ENCODE measurements at regions of chr15 and their contacts with region 1.

Region 1: DNA sequence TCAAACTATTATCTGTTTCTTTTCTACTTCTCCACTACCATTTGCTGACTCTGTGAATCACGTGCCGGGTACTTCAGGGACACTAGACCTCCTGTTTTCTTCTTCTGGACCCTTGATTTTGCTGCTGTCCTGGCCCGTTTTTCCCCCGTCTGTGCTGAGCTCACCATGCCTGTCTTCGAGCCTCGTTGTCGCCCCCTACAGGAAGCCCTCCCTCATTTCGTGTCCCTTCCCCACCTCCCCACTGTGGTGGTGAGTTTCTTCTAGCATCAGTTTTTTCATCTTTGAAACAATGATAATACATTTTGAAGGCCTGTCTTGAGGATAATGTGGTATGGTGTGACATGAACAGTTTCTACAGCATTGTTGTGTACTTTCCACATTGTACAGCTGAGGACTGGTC is 12.8 kb downstream of the GABRG3 start:
- DNase-seq: peak; percentile 42 to 64 (median 52)
- ATAC-seq: peak; percentile 93
- H3K4me3 ChIP-seq: no peak overlapping the region
- H3K27ac ChIP-seq: no peak overlapping the region
- H3K4me1 ChIP-seq: no peaks in the 10 kb centered on the region
- H3K27me3 ChIP-seq: peaks cover 3 to 10% of the 10 kb centered on the region in 2 experiments; a peak in 3 of 5 replicates
- CTCF ChIP-seq: peak; percentile 49 to 80 (median 55)
- EP300 ChIP-seq: no peak
- POLR2A ChIP-seq: no peak
- RAD21 ChIP-seq: 0 out of 4 replicates have a peak, but pooled peaks of 1 of the 2 experiments have one; percentile 4

Region 2: GRCh38 chr15:26598704-26599103 is 385.1 kb before region 1 on chr15:
- CTCF ChIA-PET with region 1: no interaction called
- POLR2A ChIA-PET with region 1: no interaction called
- in situ Hi-C with region 1: no loop called
- intact Hi-C with region 1: no loop called
- DNase-seq: no peak
- ATAC-seq: no peak
- H3K4me3 ChIP-seq: no peak overlapping the region
- H3K27ac ChIP-seq: no peak overlapping the region
- H3K4me1 ChIP-seq: no peaks in the 10 kb centered on the region
- H3K27me3 ChIP-seq: no peaks in the 10 kb centered on the region
- CTCF ChIP-seq: no peak
- EP300 ChIP-seq: no peak
- POLR2A ChIP-seq: no peak
- RAD21 ChIP-seq: no peak

Region 3: DNA sequence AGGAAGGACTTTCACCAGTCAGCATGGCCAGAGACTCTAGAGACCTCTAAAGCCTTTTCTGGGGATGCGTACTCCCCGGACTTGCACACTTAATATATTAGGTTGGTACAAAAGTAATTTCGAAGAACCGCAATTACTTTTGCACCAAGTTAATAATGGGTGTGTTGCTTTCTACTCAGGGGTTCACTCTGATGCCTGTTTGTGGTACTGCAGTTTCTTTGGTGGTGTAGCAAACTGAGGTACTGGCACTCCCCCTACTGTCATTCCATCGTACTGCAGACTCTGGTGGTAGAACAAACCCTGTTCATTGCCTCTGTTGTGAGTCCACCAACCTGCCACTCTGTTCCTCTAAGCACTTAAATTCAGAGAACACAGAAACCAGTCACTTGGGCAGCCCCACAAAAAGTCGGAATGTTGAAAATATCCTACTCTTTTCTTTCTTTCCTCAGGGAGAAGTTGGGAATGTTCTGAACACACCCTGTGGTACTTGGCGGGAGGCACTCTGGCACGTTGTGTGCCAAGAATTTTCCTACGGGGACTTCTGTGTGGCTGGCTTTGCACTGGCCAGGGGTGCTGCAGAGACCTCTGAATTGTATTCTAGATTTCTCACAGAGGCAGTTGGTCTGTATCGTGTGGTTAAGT is 33.5 kb after region 1 on chr15:
- CTCF ChIA-PET with region 1: interaction called, 3 read pairs
- POLR2A ChIA-PET with region 1: no interaction called
- in situ Hi-C with region 1: no loop called
- intact Hi-C with region 1: loop called (anchors 5 kb)
- DNase-seq: peak; percentile 71 to 80 (median 74)
- ATAC-seq: peak; percentile 99
- H3K4me3 ChIP-seq: no peak overlapping the region
- H3K27ac ChIP-seq: no peak overlapping the region
- H3K4me1 ChIP-seq: no peaks in the 10 kb centered on the region
- H3K27me3 ChIP-seq: peaks cover 2 to 8% of the 10 kb centered on the region in 2 experiments; a peak in 4 of 5 replicates
- CTCF ChIP-seq: peak; percentile 93 to 99 (median 99)
- EP300 ChIP-seq: no peak
- POLR2A ChIP-seq: no peak
- RAD21 ChIP-seq: peak; percentile 40 to 87